ENCODE measurements at regions of chr1 and their contacts with region 1.

Region 1: GRCh38 chr1:183622884-183623785 is 12.4 kb downstream of the ARPC5 start:
- DNase-seq: peak in 3 of 6 donors; percentile 38 to 44 (median 40)
- ATAC-seq: peak; percentile 74 to 94 (median 90)
- H3K4me3 ChIP-seq: no peak overlapping the region
- H3K27ac ChIP-seq: no peak overlapping the region
- H3K4me1 ChIP-seq: peaks cover 8 to 23% (median 12%) of the 10 kb centered on the region in 3 donors
- H3K27me3 ChIP-seq: no peaks in the 10 kb centered on the region
- CTCF ChIP-seq: peak in 3 of 4 donors; percentile 36 to 41 (median 36)

Region 2: GRCh38 chr1:183339556-183340167 is 283.5 kb before region 1 on chr1:
- intact Hi-C with region 1: no loop called
- DNase-seq: no peak
- ATAC-seq: no peak
- H3K4me3 ChIP-seq: no peak overlapping the region
- H3K27ac ChIP-seq: no peak overlapping the region
- H3K4me1 ChIP-seq: no peaks in the 10 kb centered on the region
- H3K27me3 ChIP-seq: no peaks in the 10 kb centered on the region
- CTCF ChIP-seq: no peak

Region 3: GRCh38 chr1:183480971-183481441 is 142.1 kb before region 1 on chr1:
- intact Hi-C with region 1: loop called in 1 of 3 experiments (anchors 10 kb)
- DNase-seq: no peak
- ATAC-seq: no peak
- H3K4me3 ChIP-seq: no peak overlapping the region
- H3K27ac ChIP-seq: no peak overlapping the region
- H3K4me1 ChIP-seq: peaks cover 9 to 46% (median 22%) of the 10 kb centered on the region in 3 donors
- H3K27me3 ChIP-seq: no peaks in the 10 kb centered on the region
- CTCF ChIP-seq: no peak

Region 4: DNA sequence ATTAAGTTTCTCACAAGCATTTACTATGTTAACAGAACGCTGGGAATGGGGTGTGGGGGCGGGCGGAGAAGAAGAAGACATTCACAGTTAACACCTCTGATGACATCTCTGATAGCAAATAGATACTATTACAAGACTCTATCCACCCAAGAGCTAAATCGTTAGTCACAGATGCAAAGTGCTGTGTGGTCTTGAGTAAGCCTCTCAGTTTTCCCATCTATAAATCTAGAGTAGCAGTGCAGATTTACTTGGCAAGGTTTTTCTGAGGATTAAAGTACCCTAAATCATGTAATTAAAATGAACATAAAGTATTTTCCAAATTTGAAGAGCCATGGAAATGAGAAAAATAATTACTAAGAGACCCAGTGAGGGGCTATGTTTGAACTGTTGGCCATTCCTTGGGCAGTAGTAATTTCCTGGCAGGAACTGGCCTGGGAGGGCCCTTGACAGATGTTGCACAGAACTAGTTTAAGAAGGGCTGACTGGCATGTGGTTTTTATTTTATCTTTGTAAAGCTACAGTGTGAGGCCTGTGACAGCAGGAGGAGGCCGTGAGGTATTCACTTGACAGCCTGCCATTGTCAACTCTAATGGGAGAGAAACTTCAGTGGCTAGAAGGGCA is 88.7 kb after region 1 on chr1:
- intact Hi-C with region 1: no loop called
- DNase-seq: no peak
- ATAC-seq: no peak
- H3K4me3 ChIP-seq: no peak overlapping the region
- H3K27ac ChIP-seq: no peak overlapping the region
- H3K4me1 ChIP-seq: no peaks in the 10 kb centered on the region
- H3K27me3 ChIP-seq: no peaks in the 10 kb centered on the region
- CTCF ChIP-seq: no peak

Measured in pancreas (tissue), 10 donors.